ENCODE measurements at regions of chr16 and their contacts with region 1.

Region 1: DNA sequence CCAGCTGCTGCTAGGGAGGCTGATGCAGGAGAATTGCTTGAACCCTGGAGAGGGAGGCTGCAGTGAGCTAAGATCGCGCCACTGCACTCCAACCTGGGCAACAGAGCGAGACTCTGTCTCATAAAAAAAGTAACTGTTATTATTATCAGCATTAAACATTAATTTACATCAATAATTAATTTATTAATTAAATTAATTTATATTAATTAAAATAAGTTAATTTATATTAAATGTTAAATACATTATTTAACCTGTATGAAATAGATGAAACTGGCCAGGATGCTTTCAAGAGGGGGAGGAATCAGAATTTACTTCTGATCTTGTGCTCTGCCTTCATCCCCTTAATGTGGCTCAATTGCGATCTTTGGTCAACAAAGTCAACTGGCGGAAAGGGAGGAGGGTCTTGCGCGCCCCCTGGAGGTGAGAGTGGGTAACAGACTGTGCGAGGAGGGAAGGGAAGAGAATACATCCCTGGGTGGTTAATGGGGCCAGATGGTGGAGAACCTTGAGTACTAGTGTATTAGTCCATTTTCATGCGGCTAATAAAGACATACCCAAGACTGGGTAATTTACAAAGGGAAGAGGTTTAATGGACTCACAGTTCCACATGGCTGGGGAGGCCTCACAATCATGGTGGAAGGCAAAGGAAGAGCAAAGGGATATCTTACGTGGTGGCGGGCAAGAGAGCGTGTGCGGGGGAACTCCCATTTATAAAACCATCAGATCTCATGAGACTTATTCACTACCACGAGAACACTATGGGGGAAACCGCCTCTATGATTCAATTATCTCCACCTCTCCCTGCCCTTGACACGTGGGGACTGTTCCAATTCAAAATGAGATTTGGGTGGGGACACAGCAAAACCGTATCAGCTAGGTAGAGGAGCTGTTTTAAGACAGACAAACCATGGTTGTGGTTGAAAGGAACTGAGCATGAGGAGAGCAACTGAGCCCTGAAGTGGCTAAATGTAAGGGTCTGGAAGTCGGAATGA is 15.7 kb upstream of the CPPED1 start:
- DNase-seq: peak in 6 of 10 donors; percentile 20 to 88 (median 72)

Region 2: GRCh38 chr16:12455287-12455798 is 364.1 kb before region 1 on chr16:
- intact Hi-C with region 1: loop called (anchors 5 kb)
- DNase-seq: peak; percentile 36 to 96 (median 70)

Region 3: DNA sequence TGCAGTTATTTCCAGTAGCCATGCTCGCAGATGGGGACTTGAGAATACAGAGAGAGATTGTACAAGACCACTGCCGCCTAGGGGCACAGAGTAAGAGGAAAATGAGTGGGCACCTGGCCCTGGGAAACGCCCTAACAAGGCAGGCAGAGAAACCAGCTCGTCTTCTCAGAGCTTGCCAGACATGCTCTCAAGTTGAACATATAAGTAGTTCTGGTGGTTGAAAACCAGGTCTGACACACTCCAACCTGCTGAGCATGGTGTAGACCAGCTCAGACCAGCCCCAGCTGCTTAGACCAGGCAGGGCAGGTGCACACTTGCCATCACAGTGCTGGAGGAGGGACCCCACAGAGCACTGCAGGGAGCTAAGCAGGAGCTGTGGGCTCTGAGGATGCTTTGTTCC is 266.2 kb before region 1 on chr16:
- intact Hi-C with region 1: no loop called
- DNase-seq: peak in 1 of 10 donors; percentile 13

Region 4: DNA sequence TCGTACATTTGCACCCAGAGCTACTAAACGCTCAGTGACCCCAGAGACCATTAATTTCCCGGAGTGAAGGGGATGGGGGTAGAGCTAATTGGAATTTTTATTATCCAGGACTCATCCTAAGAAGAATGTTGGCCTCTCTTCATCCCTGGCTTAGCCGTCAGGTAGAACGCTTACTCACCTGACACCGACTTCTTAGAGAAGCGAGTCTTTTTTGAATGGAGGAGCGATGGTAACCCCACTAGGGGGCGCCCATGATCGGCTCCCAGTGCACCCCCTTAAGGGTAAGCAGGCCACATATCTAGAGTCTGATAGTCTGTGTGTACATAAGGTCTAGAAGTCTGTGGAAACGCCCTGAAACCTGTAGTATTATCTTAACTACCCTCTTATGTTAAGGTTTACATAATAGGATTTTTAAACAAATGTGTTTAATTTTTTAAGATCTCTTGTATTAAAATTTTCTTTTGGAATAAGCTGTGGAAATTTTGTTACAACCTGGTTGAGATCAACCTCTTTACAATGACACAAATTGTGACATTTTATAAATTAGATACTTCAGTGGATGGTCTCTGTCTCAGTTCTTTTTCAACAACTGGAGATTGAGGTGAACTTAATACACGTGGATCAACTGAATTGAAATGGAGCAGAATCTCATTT is 245.6 kb before region 1 on chr16:
- intact Hi-C with region 1: loop called (anchors 5 kb)
- DNase-seq: peak in 8 of 10 donors; percentile 34 to 94 (median 62)

Region 5: GRCh38 chr16:12721841-12722421 is 97.5 kb before region 1 on chr16:
- intact Hi-C with region 1: loop called (anchors 2 kb)
- DNase-seq: no peak

Region 6: GRCh38 chr16:12951392-12951791 is 132.0 kb after region 1 on chr16:
- intact Hi-C with region 1: no loop called
- DNase-seq: no peak